GM12878 (cell line): ENCODE measurements at regions of chr1 and their contacts with region 1.

Region 1: GRCh38 chr1:109910123-109910962 is at the start of gene CSF1:
- DNase-seq: peak; percentile 48
- ATAC-seq: peak; percentile 57
- H3K4me3 ChIP-seq: peak within 1 kb of the TSS; percentile 76
- H3K27ac ChIP-seq: peak within 1 kb of the TSS; percentile 64
- H3K4me1 ChIP-seq: peaks cover 20% of the 10 kb centered on the region
- H3K27me3 ChIP-seq: no peaks in the 10 kb centered on the region
- CTCF ChIP-seq: no peak
- EP300 ChIP-seq: no peak
- POLR2A ChIP-seq: peak; percentile 74
- RAD21 ChIP-seq: no peak
- polyA plus RNA-seq, gene CSF1: 1.2 to 2.0 TPM

Region 2: GRCh38 chr1:109877320-109877771 is 33.0 kb before region 1 on chr1:
- CTCF ChIA-PET with region 1: no interaction called
- POLR2A ChIA-PET with region 1: interaction called, 3 read pairs
- RAD21 ChIA-PET with region 1: interaction called, 3 read pairs
- SMC1A ChIA-PET with region 1: interaction called, 10 read pairs
- in situ Hi-C with region 1: no loop called
- intact Hi-C with region 1: no loop called
- DNase-seq: no peak
- ATAC-seq: peak; percentile 57
- H3K4me3 ChIP-seq: no peak overlapping the region
- H3K27ac ChIP-seq: no peak overlapping the region
- H3K4me1 ChIP-seq: no peaks in the 10 kb centered on the region; the same call in 1 of the 2 replicates
- H3K27me3 ChIP-seq: no peaks in the 10 kb centered on the region
- CTCF ChIP-seq: no peak
- EP300 ChIP-seq: no peak
- POLR2A ChIP-seq: no peak
- RAD21 ChIP-seq: no peak